Naive thymus-derived CD8-positive, alpha-beta T cell (primary cell): ENCODE measurements at regions of chr10 and their contacts with region 1.

Region 1: DNA sequence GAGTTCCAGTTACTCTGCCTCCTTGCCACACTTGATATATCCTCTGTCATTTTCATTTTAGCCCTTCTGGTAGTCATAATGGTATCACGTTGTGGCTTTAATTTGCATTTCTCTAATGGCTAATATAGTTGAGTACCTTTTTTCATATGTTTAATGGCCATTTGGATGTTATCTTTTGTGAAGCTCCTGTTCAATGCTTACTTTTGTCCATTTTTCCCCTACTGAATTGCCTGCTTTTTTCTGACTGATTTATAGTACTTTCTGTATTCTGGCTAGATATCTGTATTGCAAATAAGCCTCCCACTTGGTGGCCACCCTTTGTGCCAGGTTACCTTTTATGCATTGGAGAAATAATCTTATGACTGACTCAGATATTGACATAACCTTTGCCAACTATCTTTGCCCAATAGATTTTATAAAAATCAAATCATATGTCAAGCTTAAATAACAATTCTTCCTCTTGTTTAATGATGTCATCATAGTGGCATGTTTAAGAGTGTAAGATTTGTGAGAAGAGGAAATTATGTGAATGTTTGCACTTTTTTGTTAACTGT is 50.6 kb downstream of the PRPF18 start:
- DNase-seq: no peak
- ATAC-seq: no peak
- H3K4me3 Mint-ChIP-seq: no peak overlapping the region
- H3K27ac Mint-ChIP-seq: no peak overlapping the region
- H3K4me1 Mint-ChIP-seq: peaks cover 0 to 12% (median 0%) of the 10 kb centered on the region in 4 donors
- H3K27me3 Mint-ChIP-seq: no peaks in the 10 kb centered on the region

Region 2: GRCh38 chr10:12690525-12691126 is 946.8 kb before region 1 on chr10:
- POLR2A ChIA-PET with region 1: interaction called, 14 read pairs
- DNase-seq: no peak
- ATAC-seq: no peak
- H3K4me3 Mint-ChIP-seq: no peak overlapping the region
- H3K27ac Mint-ChIP-seq: no peak overlapping the region
- H3K4me1 Mint-ChIP-seq: peaks cover 0 to 9% (median 3%) of the 10 kb centered on the region in 4 donors
- H3K27me3 Mint-ChIP-seq: no peaks in the 10 kb centered on the region

Region 3: DNA sequence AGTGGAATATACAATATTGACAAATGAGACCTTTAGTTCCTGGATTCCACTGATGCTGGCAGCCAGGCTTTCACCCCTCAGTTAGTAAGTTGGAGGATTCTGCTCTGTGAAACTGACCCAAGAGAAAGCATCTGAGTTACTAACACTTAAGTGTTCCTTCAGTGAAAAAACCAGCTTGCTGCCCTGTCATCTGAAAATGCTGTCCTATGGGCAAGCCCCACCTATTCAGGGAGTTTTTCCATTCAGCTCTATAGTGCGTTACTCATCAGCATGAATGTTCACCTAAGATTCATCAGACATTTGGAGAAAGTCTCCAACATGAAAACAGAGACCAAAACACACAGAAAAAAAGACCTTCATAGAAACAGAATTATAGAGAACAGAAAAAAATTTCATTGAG is 12.8 kb before region 1 on chr10:
- POLR2A ChIA-PET with region 1: no interaction called
- DNase-seq: no peak
- ATAC-seq: no peak
- H3K4me3 Mint-ChIP-seq: no peak overlapping the region
- H3K27ac Mint-ChIP-seq: no peak overlapping the region
- H3K4me1 Mint-ChIP-seq: no peaks in the 10 kb centered on the region
- H3K27me3 Mint-ChIP-seq: no peaks in the 10 kb centered on the region